ENCODE measurements at regions of chr19 and their contacts with region 1.

Region 1: DNA sequence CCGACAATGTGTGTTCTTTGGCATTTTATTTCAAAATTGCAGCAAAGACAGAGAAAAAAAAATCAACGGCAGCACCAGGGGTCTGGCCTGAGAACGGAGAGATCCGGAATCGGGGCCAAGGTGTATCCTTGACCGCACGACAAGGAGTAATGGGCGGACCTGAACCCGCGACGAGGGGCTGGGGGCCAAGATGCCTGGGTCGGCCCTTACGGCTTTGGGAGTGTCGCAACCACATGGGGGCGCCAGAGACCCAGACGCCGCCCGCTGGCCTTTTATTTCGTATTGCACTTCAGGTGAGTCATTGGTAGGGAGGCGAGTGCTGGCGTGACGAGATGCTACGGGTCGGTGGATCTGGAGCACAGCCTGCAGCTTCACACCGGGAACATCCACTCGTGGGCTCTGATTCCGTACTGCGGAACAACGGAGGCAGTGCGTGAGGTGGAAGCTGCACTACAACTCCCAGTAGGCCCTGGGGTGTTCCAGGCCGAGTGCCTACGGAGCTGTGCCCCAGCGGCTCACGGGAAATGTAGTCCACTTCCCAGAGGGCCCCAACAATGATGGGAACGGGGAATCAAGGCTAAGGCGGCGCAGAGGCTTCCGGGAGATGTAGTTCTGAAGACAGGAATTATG is 15.7 kb downstream of the BCAT2 start:
- DNase-seq: peak; percentile 89
- ATAC-seq: peak; percentile 98
- H3K4me3 Mint-ChIP-seq: peak overlapping the region; percentile 84
- H3K27ac Mint-ChIP-seq: peak overlapping the region; percentile 85
- H3K4me1 Mint-ChIP-seq: peaks cover 8% of the 10 kb centered on the region
- H3K27me3 Mint-ChIP-seq: no peaks in the 10 kb centered on the region

Region 2: DNA sequence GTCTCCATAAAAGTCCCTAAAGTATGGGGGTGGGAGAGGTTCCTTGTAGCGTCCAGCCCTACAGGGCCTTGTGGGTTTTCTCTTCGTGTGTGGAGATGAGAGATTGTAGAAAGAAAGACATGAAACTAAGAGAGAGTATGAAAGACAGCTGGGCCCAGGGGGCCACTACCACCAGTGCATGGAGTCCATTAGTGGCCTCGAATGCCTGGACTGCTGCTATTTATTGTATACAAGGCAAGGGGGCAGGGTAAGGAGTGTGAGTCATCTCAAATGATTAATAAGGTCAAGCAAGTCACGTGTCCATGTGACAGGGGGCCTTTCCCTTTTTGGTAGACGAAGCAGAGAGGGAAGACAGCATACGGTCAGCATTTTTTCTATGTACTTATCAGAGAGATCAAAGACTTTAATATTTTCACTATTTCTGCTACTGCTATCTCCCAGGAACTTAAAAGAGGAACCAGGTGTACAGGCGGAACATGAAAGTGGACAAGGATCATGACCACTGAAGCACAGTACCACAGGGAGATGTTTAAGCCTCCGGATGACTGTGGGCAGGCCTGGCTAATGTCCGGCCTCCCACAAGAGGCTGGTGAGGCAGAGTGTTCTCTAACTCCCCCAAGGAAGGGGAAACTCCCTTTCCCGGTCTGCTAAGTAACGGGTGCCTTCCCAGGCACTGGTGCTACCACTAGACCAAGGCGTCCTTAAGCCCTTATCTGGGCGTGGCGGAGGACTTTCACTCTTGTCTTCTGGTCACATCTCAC is 14.4 kb before region 1 on chr19:
- CTCF ChIA-PET with region 1: interaction called, 10 read pairs
- POLR2A ChIA-PET with region 1: no interaction called
- DNase-seq: no peak
- ATAC-seq: no peak
- H3K4me3 Mint-ChIP-seq: no peak overlapping the region
- H3K27ac Mint-ChIP-seq: no peak overlapping the region
- H3K4me1 Mint-ChIP-seq: peaks cover 2% of the 10 kb centered on the region
- H3K27me3 Mint-ChIP-seq: peaks cover 7% of the 10 kb centered on the region

Region 3: DNA sequence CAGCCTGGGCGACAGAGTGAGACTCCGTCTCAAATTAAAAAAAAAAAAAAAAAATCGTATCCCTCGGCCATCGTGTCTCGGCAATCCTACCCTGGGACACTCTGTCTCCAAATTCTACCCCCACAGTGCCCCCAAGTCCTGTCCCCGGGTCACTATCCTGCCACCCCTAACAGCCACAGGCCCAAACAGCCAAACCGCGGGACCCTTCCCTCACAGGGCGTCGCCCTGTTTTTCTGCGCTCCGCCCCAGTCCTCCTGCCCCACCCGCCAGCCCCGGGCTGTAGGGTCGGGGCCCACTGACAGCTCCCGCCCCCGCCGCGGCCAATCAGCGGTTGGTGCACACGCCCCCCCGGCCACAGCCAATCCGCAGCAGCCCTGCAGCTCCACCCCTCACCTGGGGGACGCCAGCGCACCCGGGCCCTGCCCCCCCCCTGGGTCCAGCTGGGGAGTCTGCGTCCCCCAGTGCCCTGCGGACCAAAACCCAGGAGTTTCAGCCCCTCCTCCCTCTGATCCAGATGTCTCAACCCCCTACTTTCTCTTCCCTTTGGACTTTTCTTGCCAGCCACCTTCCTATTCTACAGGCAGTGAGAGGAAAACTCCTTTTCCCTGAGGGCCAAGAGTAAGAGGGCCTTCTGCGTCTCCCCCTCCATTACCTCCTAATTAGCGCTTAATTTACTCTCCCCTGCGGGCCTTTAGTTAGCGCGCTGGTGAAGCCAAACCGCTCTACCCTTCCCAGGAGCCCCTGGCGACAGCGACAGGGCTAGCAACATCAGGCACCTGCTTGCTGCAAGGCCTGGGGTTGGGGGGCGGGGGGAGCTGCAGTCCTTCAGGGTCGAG is 17.1 kb after region 1 on chr19:
- CTCF ChIA-PET with region 1: interaction called, 72 read pairs
- POLR2A ChIA-PET with region 1: interaction called, 3 read pairs
- DNase-seq: peak; percentile 75
- ATAC-seq: peak; percentile 60
- H3K4me3 Mint-ChIP-seq: peak overlapping the region; percentile 83
- H3K27ac Mint-ChIP-seq: peak overlapping the region; percentile 76
- H3K4me1 Mint-ChIP-seq: peaks cover 32% of the 10 kb centered on the region
- H3K27me3 Mint-ChIP-seq: no peaks in the 10 kb centered on the region

Region 4: GRCh38 chr19:48835734-48836088 is 40.5 kb after region 1 on chr19:
- CTCF ChIA-PET with region 1: interaction called, 127 read pairs
- POLR2A ChIA-PET with region 1: interaction called, 3 read pairs
- DNase-seq: peak; percentile 97
- ATAC-seq: peak; percentile 95
- H3K4me3 Mint-ChIP-seq: peak overlapping the region; percentile 70
- H3K27ac Mint-ChIP-seq: peak overlapping the region; percentile 83
- H3K4me1 Mint-ChIP-seq: peaks cover 21% of the 10 kb centered on the region
- H3K27me3 Mint-ChIP-seq: no peaks in the 10 kb centered on the region

Region 5: GRCh38 chr19:48970923-48971395 is 175.8 kb after region 1 on chr19:
- CTCF ChIA-PET with region 1: interaction called, 20 read pairs
- POLR2A ChIA-PET with region 1: interaction called, 3 read pairs
- DNase-seq: peak; percentile 89
- ATAC-seq: peak; percentile 68
- H3K4me3 Mint-ChIP-seq: no peak overlapping the region
- H3K27ac Mint-ChIP-seq: no peak overlapping the region
- H3K4me1 Mint-ChIP-seq: peaks cover 31% of the 10 kb centered on the region
- H3K27me3 Mint-ChIP-seq: no peaks in the 10 kb centered on the region